ENCODE measurements at regions of chr12 and their contacts with region 1.

Region 1: GRCh38 chr12:31406345-31406744 is 80.4 kb upstream of the SINHCAF start:
- DNase-seq: peak in 1 of 2 experiments; percentile 8
- H3K4me3 ChIP-seq: no peak overlapping the region
- H3K27ac ChIP-seq: no peak overlapping the region
- H3K4me1 ChIP-seq: no peaks in the 10 kb centered on the region
- H3K27me3 ChIP-seq: no peaks in the 10 kb centered on the region
- CTCF ChIP-seq: no peak
- EP300 ChIP-seq: no peak
- POLR2A ChIP-seq: no peak
- RAD21 ChIP-seq: no peak

Region 2: GRCh38 chr12:31274520-31275300 is 131.6 kb before region 1 on chr12:
- CTCF ChIA-PET with region 1: interaction called, 12 read pairs
- POLR2A ChIA-PET with region 1: no interaction called
- DNase-seq: no peak
- H3K4me3 ChIP-seq: no peak overlapping the region
- H3K27ac ChIP-seq: no peak overlapping the region
- H3K4me1 ChIP-seq: no peaks in the 10 kb centered on the region; a peak in 2 of 7 replicates
- H3K27me3 ChIP-seq: no peaks in the 10 kb centered on the region
- CTCF ChIP-seq: no peak
- EP300 ChIP-seq: no peak
- POLR2A ChIP-seq: no peak
- RAD21 ChIP-seq: no peak

Region 3: DNA sequence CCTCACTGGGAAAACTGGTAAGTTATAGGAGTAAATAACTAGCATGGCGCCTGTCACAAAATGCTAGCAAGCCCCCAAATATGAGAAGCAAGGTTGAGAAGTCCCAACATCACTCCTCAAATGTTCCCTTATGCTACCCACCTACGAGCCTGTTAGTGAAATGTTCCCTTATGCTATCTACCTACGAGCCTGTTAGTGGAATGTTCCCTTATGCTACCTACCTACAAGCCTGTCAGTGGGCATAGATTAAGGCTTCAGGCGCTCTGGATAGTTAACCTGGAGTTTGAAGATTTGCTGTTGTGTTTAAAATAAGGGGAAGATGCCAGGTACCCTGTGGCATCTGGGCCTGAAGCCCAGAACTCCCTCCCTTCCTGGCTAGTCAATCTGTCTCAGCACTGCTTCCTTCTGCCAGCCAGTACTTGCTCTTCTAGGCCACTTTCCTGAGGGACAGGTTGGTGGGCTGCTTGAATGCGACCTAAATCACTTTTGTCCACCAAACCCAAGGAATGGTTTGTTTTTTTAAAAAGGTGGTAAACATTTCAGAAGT is 13.3 kb before region 1 on chr12:
- CTCF ChIA-PET with region 1: interaction called, 19 read pairs
- POLR2A ChIA-PET with region 1: interaction called, 28 read pairs
- DNase-seq: no peak
- H3K4me3 ChIP-seq: no peak overlapping the region
- H3K27ac ChIP-seq: no peak overlapping the region
- H3K4me1 ChIP-seq: peaks cover 0 to 3% (median 1%) of the 10 kb centered on the region in 4 experiments; a peak in 2 of 7 replicates
- H3K27me3 ChIP-seq: no peaks in the 10 kb centered on the region
- CTCF ChIP-seq: no peak
- EP300 ChIP-seq: no peak
- POLR2A ChIP-seq: no peak
- RAD21 ChIP-seq: no peak

Region 4: DNA sequence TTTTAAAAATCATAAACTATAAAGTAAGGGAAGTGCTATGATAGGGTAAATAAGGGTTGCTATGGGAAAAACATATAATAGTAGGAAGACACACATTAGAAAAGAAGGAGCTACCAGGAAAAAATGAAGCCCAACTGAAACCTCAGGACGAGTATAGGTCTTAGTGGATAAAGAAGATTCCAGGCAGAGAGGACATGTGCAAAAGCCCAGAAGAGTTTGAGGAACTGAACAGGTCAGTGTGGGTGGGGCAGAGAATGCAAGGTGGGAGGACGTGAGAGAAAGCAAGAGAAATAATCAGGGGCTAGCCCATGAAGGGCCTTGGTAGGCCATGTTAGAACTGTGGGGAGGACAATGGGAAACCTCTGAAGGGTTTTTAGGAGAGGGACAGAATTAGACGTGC is 75.1 kb after region 1 on chr12:
- CTCF ChIA-PET with region 1: no interaction called
- POLR2A ChIA-PET with region 1: no interaction called
- DNase-seq: no peak
- H3K4me3 ChIP-seq: no peak overlapping the region
- H3K27ac ChIP-seq: no peak overlapping the region
- H3K4me1 ChIP-seq: peaks cover 0 to 5% (median 0%) of the 10 kb centered on the region in 4 experiments; a peak in 2 of 7 replicates
- H3K27me3 ChIP-seq: no peaks in the 10 kb centered on the region
- CTCF ChIP-seq: no peak
- EP300 ChIP-seq: no peak
- POLR2A ChIP-seq: no peak
- RAD21 ChIP-seq: no peak

Region 5: GRCh38 chr12:31527083-31527482 is 120.7 kb after region 1 on chr12:
- CTCF ChIA-PET with region 1: no interaction called
- POLR2A ChIA-PET with region 1: no interaction called
- DNase-seq: no peak
- H3K4me3 ChIP-seq: no peak overlapping the region
- H3K27ac ChIP-seq: no peak overlapping the region
- H3K4me1 ChIP-seq: peaks cover under 1 to 13% (median 4%) of the 10 kb centered on the region in 4 experiments; a peak in 5 of 7 replicates
- H3K27me3 ChIP-seq: no peaks in the 10 kb centered on the region
- CTCF ChIP-seq: no peak
- EP300 ChIP-seq: no peak
- POLR2A ChIP-seq: no peak
- RAD21 ChIP-seq: no peak

Region 6: GRCh38 chr12:31599053-31599452 is 192.7 kb after region 1 on chr12:
- CTCF ChIA-PET with region 1: interaction called, 13 read pairs
- POLR2A ChIA-PET with region 1: no interaction called
- DNase-seq: no peak
- H3K4me3 ChIP-seq: no peak overlapping the region
- H3K27ac ChIP-seq: no peak overlapping the region
- H3K4me1 ChIP-seq: no peaks in the 10 kb centered on the region
- H3K27me3 ChIP-seq: no peaks in the 10 kb centered on the region
- CTCF ChIP-seq: no peak
- EP300 ChIP-seq: no peak
- POLR2A ChIP-seq: no peak
- RAD21 ChIP-seq: no peak

Region 7: GRCh38 chr12:31634620-31635019 is 228.3 kb after region 1 on chr12:
- CTCF ChIA-PET with region 1: interaction called, 31 read pairs
- POLR2A ChIA-PET with region 1: no interaction called
- DNase-seq: no peak
- H3K4me3 ChIP-seq: no peak overlapping the region
- H3K27ac ChIP-seq: no peak overlapping the region
- H3K4me1 ChIP-seq: no peaks in the 10 kb centered on the region
- H3K27me3 ChIP-seq: no peaks in the 10 kb centered on the region
- CTCF ChIP-seq: no peak
- EP300 ChIP-seq: no peak
- POLR2A ChIP-seq: no peak
- RAD21 ChIP-seq: no peak

Region 8: GRCh38 chr12:31682136-31682962 is 276.0 kb after region 1 on chr12:
- CTCF ChIA-PET with region 1: no interaction called
- POLR2A ChIA-PET with region 1: no interaction called
- DNase-seq: peak; percentile 69 to 78
- H3K4me3 ChIP-seq: no peak overlapping the region
- H3K27ac ChIP-seq: no peak overlapping the region
- H3K4me1 ChIP-seq: no peaks in the 10 kb centered on the region
- H3K27me3 ChIP-seq: no peaks in the 10 kb centered on the region
- CTCF ChIP-seq: peak; percentile 47 to 90 (median 78)
- EP300 ChIP-seq: no peak; a peak in 1 of 3 replicates
- POLR2A ChIP-seq: no peak
- RAD21 ChIP-seq: peak; percentile 100

Measured in H1 (cell line).